Dorsolateral prefrontal cortex (tissue), 120 donors: ENCODE measurements at regions of chr5 and their contacts with region 1.

Region 1: GRCh38 chr5:32444431-32445286 is at the start of gene ZFR:
- DNase-seq: peak; percentile 82 to 96 (median 90)
- H3K4me3 ChIP-seq: peak within 1 kb of the TSS; percentile 65 to 98 (median 88)
- H3K27ac ChIP-seq: peak within 1 kb of the TSS; percentile 64 to 97 (median 92)
- H3K27me3 ChIP-seq: no peaks in the 10 kb centered on the region
- CTCF ChIP-seq: peak in 18 of 56 donors; percentile 5 to 42 (median 17)
- total RNA-seq, gene ZFR: 85.2 to 155 (median 104) TPM

Region 2: GRCh38 chr5:32312647-32313523 is 131.8 kb before region 1 on chr5 and contains the start of gene MTMR12:
- intact Hi-C with region 1: loop called (anchors 1 to 5 kb)
- DNase-seq: peak; percentile 98 to 100 (median 100)
- H3K4me3 ChIP-seq: peak within 1 kb of the TSS; percentile 64 to 100 (median 91)
- H3K27ac ChIP-seq: peak within 1 kb of the TSS; percentile 46 to 99 (median 92)
- H3K27me3 ChIP-seq: no peaks in the 10 kb centered on the region
- CTCF ChIP-seq: peak in 20 of 56 donors; percentile 6 to 40 (median 20)
- total RNA-seq, gene MTMR12: 24.4 to 67.2 (median 41.4) TPM

Region 3: GRCh38 chr5:32390819-32391591 is 53.7 kb before region 1 on chr5:
- intact Hi-C with region 1: loop called (anchors 5 to 10 kb)
- DNase-seq: no peak
- H3K4me3 ChIP-seq: no peak overlapping the region
- H3K27ac ChIP-seq: peak overlapping the region in 48 of 59 donors; percentile 3 to 75 (median 44)
- H3K27me3 ChIP-seq: no peaks in the 10 kb centered on the region
- CTCF ChIP-seq: no peak

Region 4: GRCh38 chr5:32984851-32985610 is 540.4 kb after region 1 on chr5:
- intact Hi-C with region 1: no loop called
- DNase-seq: no peak
- H3K4me3 ChIP-seq: no peak overlapping the region
- H3K27ac ChIP-seq: no peak overlapping the region
- H3K27me3 ChIP-seq: no peaks in the 10 kb centered on the region
- CTCF ChIP-seq: no peak